Caco-2 (cell line): ENCODE measurements at regions of chr3 and their contacts with region 1.

Region 1: DNA sequence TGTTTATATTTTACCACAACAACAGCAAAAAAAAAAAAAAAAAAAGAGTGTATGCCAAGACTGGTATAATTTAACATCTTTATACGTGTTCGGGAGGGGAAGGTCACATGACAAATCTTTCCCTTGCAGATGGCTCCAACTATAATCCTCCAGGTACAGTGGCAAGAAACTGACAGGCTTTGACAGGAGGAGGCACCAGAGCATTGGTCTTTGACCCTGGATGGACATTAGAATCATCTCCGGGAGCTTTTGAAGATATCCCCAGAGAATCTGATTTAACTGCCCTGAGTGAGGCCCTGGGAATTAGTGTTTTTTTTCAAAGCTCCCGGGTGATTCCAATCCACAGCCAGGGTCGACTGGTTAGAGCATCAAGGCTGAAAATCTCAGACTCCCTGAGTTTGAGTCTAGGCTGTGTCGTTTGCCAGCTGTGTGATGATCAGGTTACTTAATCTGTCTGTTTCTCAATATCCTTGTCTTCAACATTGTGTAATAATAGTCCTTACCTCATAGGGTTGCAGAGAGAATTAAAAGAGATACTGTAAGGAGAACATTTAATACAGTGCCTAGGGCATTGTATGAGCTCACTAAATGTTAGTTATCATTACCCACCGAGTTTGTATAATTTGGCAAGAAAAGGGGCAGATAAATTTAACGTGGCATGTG is 8.9 kb upstream of the SEMA5B start:
- DNase-seq: peak in 1 of 2 experiments; percentile 23
- H3K4me3 ChIP-seq: no peak overlapping the region
- H3K4me3 Mint-ChIP-seq: no peak overlapping the region
- H3K27ac Mint-ChIP-seq: no peak overlapping the region
- H3K4me1 ChIP-seq: peaks cover 8% of the 10 kb centered on the region; the same call in 1 of the 2 replicates
- H3K4me1 Mint-ChIP-seq: peaks cover 39% of the 10 kb centered on the region
- H3K27me3 ChIP-seq: no peaks in the 10 kb centered on the region
- H3K27me3 Mint-ChIP-seq: no peaks in the 10 kb centered on the region
- CTCF ChIP-seq: peak in 1 of 2 experiments; percentile 3

Region 2: GRCh38 chr3:123081718-123082369 is 45.4 kb after region 1 on chr3:
- CTCF ChIA-PET with region 1: no interaction called
- POLR2A ChIA-PET with region 1: no interaction called
- intact Hi-C with region 1: loop called (anchors 5 kb)
- DNase-seq: no peak
- H3K4me3 ChIP-seq: no peak overlapping the region
- H3K4me3 Mint-ChIP-seq: no peak overlapping the region
- H3K27ac Mint-ChIP-seq: peak overlapping the region; percentile 77
- H3K4me1 ChIP-seq: peaks cover 59% of the 10 kb centered on the region
- H3K4me1 Mint-ChIP-seq: peaks cover 27% of the 10 kb centered on the region
- H3K27me3 ChIP-seq: no peaks in the 10 kb centered on the region
- H3K27me3 Mint-ChIP-seq: no peaks in the 10 kb centered on the region
- CTCF ChIP-seq: no peak